IMR-90 (cell line): ENCODE measurements at regions of chr7 and their contacts with region 1.

Region 1: GRCh38 chr7:98294796-98295382 is 13.4 kb downstream of the BRI3 start:
- DNase-seq: peak; percentile 47
- ATAC-seq: peak; percentile 83
- H3K4me3 ChIP-seq: no peak overlapping the region
- H3K27ac ChIP-seq: no peak overlapping the region
- H3K4me1 ChIP-seq: no peaks in the 10 kb centered on the region
- H3K27me3 ChIP-seq: no peaks in the 10 kb centered on the region
- CTCF ChIP-seq: peak; percentile 74
- POLR2A ChIP-seq: peak; percentile 36; the same call in 1 of the 2 replicates
- RAD21 ChIP-seq: peak; percentile 90

Region 2: DNA sequence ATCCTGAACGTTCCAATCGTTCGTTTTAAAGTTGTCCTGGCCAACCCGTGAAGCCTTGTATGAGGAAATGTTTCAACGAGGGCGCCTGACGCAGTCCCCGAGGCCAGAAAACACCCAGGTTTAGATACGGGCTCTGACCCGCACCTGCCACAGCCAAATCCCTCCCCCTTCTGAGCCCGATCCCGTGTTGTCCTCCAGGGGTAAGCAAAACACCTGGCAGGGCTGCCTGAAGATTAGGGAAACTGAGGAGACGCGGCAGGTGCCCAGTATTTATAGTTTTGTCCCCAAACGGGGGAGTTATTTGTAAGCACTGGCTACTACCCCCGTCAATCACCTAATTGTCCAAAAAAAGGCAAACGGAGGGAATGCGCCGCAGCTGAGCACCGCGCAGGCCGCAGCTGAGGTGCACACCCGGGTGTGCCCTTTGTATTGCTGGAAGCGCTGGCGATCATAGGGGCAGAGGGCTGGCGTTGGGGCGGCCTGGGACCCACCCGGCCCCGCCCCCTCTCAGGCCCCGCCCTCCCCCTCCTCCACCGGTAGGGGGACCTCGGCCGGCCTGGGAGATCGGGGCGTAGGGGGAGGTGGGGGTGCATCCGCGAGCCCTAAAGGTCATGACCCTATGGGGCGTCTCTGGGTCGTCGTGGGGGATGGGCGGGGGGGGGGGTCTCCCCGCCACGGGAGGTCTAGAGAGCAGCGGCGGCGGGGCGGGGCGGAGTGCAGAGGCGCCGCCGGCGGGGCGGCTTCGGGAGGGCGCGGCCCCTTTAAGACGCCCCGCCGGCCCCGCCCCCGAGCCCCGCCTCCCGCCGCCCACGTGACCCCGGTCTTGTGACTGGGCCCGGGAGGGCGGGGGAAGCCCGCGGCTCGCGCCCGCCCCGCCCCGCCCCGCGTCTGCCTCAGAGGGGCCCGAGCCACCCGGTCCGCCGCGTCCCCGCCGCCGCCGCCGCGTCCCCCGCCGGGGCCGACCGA is 13.8 kb before region 1 on chr7 and contains the start of gene BRI3:
- CTCF ChIA-PET with region 1: no interaction called
- POLR2A ChIA-PET with region 1: no interaction called
- dilution Hi-C with region 1: no loop called
- in situ Hi-C with region 1: no loop called
- intact Hi-C with region 1: no loop called
- DNase-seq: peak; percentile 73
- ATAC-seq: peak; percentile 79
- H3K4me3 ChIP-seq: peak within 1 kb of the TSS; percentile 88
- H3K27ac ChIP-seq: peak within 1 kb of the TSS; percentile 91
- H3K4me1 ChIP-seq: peaks cover 36% of the 10 kb centered on the region
- H3K27me3 ChIP-seq: no peaks in the 10 kb centered on the region
- CTCF ChIP-seq: no peak
- POLR2A ChIP-seq: 0 out of 2 replicates have a peak, but pooled peaks have one; percentile 6
- RAD21 ChIP-seq: no peak
- total RNA-seq, gene BRI3: 24.7 and 30.6 TPM in 2 replicates

Region 3: DNA sequence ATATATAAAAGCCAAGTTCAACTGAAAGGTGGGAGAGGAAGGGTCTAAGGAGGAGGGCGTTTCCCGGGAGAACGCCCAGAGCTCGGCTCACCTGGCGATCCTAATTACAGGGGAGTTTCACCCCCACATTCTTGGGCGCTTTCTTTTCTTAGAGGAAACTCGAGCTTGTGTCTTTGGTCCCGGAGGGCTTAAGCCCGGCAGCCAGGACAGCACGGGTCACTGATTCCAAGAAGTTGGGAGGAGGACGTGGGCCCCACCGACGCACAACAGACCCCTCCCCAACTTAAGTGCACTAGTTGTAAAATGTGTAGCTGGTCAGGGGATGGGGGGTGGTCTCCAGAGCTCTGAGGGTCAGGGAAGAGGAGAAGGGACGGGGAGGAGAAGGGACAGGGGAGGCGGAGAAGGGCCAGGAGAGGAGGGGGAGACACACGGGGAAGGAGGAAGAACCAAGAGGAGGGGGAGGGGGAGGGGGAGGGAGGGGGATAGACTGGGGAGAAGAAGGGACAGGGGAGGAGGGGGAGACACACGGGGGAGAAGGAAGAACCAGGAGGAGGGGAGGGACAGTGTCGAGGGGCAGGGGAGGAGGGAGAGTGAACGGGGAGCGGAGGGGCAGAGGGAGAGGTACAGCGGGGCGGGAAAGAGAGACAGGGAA is 105.1 kb after region 1 on chr7:
- CTCF ChIA-PET with region 1: interaction called, 4 read pairs
- POLR2A ChIA-PET with region 1: interaction called, 3 read pairs
- dilution Hi-C with region 1: no loop called
- in situ Hi-C with region 1: loop called (anchors 5 kb)
- intact Hi-C with region 1: loop called (anchors 1 kb)
- DNase-seq: peak; percentile 17
- ATAC-seq: no peak; the same call in 1 of the 2 replicates
- H3K4me3 ChIP-seq: peak overlapping the region; percentile 95
- H3K27ac ChIP-seq: peak overlapping the region; percentile 92
- H3K4me1 ChIP-seq: peaks cover 9% of the 10 kb centered on the region
- H3K27me3 ChIP-seq: no peaks in the 10 kb centered on the region; the same call in 1 of the 2 replicates
- CTCF ChIP-seq: no peak
- POLR2A ChIP-seq: no peak
- RAD21 ChIP-seq: no peak

Region 4: DNA sequence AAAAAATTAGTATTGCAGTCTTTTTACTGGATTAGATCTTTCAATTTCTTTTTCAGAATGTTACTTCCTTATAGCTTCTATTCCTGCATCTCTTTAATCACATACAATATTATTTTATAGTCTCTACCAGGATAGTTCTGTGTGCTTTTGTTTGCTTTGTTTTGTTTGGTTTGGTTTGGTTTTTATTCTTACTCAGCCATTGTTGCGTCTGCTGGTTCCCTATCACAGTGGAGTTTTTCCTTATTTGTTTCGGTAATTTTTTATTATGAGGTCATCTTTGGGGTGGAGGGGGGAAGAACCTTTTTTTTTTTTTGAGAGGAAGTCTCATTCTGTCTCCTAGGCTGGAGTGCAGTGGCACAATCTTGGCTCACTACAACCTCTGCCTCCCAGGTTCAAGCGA is 115.0 kb after region 1 on chr7:
- CTCF ChIA-PET with region 1: no interaction called
- POLR2A ChIA-PET with region 1: no interaction called
- dilution Hi-C with region 1: no loop called
- in situ Hi-C with region 1: loop called (anchors 5 kb)
- intact Hi-C with region 1: no loop called
- DNase-seq: no peak
- ATAC-seq: no peak
- H3K4me3 ChIP-seq: no peak overlapping the region
- H3K27ac ChIP-seq: no peak overlapping the region
- H3K4me1 ChIP-seq: no peaks in the 10 kb centered on the region
- H3K27me3 ChIP-seq: no peaks in the 10 kb centered on the region
- CTCF ChIP-seq: no peak
- POLR2A ChIP-seq: no peak
- RAD21 ChIP-seq: no peak

Region 5: DNA sequence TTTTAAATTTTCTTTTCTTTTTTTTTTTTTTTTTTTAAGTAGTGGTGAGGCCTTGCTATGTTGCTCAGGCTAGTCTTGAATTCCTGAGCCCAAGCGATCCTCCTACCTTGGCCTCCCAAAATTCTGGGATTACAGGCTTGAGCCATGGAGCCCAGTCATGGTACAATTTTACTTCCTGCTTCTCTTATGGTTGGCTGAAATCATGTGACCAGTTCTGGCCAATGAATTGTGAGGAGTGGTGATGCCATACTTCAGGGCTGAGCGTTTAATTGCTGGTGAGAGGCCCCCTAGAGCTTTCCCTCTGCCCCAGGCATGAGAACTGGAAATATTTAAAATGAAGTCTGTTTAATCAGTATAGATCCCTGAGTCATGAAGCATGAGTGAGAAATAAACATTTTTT is 128.2 kb after region 1 on chr7:
- CTCF ChIA-PET with region 1: no interaction called
- POLR2A ChIA-PET with region 1: no interaction called
- dilution Hi-C with region 1: no loop called
- in situ Hi-C with region 1: no loop called
- intact Hi-C with region 1: no loop called
- DNase-seq: peak; percentile 30
- ATAC-seq: no peak
- H3K4me3 ChIP-seq: no peak overlapping the region
- H3K27ac ChIP-seq: no peak overlapping the region
- H3K4me1 ChIP-seq: peaks cover 10% of the 10 kb centered on the region
- H3K27me3 ChIP-seq: no peaks in the 10 kb centered on the region
- CTCF ChIP-seq: no peak
- POLR2A ChIP-seq: no peak
- RAD21 ChIP-seq: no peak

Region 6: DNA sequence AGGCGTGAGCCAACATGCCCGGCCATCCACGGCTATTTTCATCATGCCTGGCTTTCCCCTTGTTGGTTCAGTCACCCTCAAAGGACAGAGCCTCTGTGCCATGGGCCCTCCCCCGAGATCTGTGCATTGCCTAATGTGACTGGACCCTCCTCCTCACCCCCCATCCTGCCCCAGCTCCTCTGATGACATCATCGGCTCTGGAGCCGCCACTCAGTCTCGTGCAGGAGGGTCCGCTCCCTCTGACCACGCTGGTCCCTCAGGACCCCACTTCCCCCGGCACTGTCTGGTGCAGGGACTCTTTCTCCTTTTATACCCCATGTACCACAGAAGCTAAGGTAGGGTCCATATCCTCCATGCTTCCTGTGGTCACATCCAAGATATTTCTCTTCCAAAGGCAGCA is 139.2 kb after region 1 on chr7:
- CTCF ChIA-PET with region 1: no interaction called
- POLR2A ChIA-PET with region 1: no interaction called
- dilution Hi-C with region 1: no loop called
- in situ Hi-C with region 1: no loop called
- intact Hi-C with region 1: loop called (anchors 1 kb)
- DNase-seq: no peak
- ATAC-seq: no peak
- H3K4me3 ChIP-seq: no peak overlapping the region
- H3K27ac ChIP-seq: no peak overlapping the region
- H3K4me1 ChIP-seq: no peaks in the 10 kb centered on the region
- H3K27me3 ChIP-seq: no peaks in the 10 kb centered on the region
- CTCF ChIP-seq: no peak
- POLR2A ChIP-seq: no peak
- RAD21 ChIP-seq: no peak

Region 7: DNA sequence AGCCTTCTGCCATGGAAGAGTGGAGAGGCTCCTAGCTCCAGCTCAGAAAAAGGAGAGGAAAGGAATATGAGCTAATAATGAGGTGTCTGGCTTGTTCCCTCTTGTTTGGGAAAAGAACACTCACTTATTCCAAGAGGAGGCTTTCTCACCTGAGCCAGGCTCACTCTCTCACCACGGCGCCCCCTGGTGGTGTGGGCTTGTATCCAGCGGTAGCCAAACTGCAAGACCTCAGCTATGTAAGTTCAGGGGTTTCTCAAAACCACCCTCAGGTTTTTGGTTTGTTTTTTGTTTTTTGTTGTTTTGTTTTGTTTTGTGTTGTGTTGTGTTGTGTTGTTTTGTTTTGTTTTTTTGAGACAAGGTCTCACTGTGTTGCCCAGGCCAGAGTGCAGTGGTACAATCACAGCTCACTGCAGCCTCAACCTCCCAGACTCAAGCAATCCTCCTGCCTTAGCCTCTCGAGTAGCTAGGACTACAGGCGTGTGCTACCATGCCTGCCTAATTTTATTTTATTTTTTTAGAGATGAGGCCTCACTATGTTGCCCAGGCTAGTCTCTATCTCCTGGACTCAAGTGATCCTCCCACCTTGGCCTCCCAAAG is 450.9 kb after region 1 on chr7:
- CTCF ChIA-PET with region 1: interaction called, 3 read pairs
- POLR2A ChIA-PET with region 1: no interaction called
- dilution Hi-C with region 1: no loop called
- in situ Hi-C with region 1: loop called (anchors 25 kb)
- intact Hi-C with region 1: loop called (anchors 1 kb)
- DNase-seq: peak; percentile 17
- ATAC-seq: peak; percentile 66; the same call in 1 of the 2 replicates
- H3K4me3 ChIP-seq: no peak overlapping the region
- H3K27ac ChIP-seq: no peak overlapping the region
- H3K4me1 ChIP-seq: no peaks in the 10 kb centered on the region
- H3K27me3 ChIP-seq: no peaks in the 10 kb centered on the region
- CTCF ChIP-seq: peak; percentile 49
- POLR2A ChIP-seq: no peak
- RAD21 ChIP-seq: peak; percentile 36

Region 8: DNA sequence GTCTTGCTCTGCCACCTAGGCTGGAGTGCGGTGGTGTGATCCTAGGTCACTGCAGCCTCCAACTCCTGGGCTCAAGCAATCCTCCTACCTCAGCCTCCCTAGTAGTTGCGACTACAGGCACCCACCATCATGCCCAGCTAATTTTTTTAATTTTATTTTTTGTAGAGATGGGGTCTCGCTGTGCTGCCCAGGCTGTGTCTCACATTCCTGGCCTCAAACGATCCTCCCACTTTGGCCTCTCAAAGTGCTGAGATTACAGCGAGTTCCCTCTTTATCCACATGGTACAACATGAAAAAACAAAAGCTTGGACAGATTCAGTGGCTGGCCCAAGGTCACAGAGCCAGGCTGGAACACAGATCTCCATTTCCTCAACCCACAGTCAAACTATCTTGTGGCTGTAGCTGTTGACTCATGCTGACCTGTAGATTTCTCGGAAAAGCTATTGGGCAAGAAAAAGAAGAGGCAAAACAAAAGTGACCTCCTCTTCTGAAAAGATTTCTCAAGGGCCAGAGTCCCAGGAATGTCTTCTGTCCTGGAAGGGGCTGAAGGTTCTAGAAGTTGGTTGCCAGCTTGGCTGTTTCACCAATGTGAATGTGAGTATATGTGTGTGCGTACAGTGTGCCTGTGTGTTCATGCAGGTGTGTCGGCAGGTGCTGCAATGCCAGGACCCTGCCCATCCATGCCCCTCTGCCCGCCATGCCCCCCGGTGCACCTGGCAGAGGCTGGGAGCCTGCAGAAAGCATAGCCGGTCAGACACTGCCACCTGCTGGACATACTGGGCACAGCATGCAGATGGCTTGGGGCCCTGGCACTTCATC is 546.5 kb after region 1 on chr7:
- CTCF ChIA-PET with region 1: no interaction called
- POLR2A ChIA-PET with region 1: no interaction called
- dilution Hi-C with region 1: no loop called
- in situ Hi-C with region 1: loop called (anchors 5 kb)
- intact Hi-C with region 1: loop called (anchors 1 kb)
- DNase-seq: peak; percentile 85
- ATAC-seq: peak; percentile 88
- H3K4me3 ChIP-seq: no peak overlapping the region
- H3K27ac ChIP-seq: peak overlapping the region; percentile 26; the same call in 1 of the 2 replicates
- H3K4me1 ChIP-seq: peaks cover 5% of the 10 kb centered on the region; the same call in 1 of the 2 replicates
- H3K27me3 ChIP-seq: no peaks in the 10 kb centered on the region; the same call in 1 of the 2 replicates
- CTCF ChIP-seq: peak; percentile 90
- POLR2A ChIP-seq: no peak
- RAD21 ChIP-seq: peak; percentile 93